ENCODE measurements at regions of chr17 and their contacts with region 1.

Region 1: DNA sequence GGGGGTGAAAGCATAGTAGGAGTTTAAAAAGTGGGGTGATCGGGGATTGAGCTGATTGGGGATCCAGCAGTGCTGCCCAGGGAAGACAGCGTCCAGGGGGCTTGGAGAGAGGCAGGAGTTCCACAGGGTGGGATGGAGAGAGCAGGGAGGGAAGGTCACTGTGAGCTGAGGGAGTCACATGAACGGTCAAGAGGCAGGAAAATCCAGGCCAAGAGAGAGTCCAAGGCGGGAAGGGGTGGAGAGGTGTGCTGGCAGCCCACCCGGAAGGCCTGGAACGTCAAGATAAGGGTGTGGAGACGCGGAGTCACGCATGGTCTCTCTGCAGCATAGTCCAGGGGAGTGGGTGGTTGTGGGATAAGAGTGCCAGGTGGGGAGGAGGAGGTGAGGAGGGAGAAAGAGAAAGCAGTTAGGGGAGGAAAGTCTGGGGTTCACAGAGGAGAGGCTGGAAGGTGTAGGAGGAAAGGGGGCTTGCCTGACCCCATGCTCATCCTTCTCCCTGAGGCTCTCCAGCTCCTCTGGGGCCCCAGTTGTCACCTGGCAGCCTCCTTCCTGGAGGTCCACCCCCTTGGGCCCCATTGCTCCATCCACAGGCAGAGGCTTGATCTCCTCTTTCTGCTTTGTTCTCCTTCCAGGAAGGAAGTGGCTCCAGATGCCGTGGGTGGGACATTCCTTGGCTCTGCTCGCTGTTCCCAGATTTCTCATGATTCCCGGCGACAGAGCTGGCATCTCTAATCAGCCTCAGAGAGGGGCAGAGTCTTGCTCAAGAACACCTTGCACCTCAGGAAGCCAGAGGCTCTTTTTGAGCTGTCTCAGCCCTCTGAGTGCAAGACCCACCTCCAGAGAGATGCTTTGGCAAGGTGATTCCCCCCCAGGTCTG is 28.7 kb downstream of the CCR7 start:
- DNase-seq: no peak
- H3K4me3 ChIP-seq: no peak overlapping the region
- H3K4me3 Mint-ChIP-seq: no peak overlapping the region
- H3K27ac Mint-ChIP-seq: no peak overlapping the region
- H3K4me1 ChIP-seq: 0 out of 2 replicates have a peak, but pooled peaks cover 9% of the 10 kb centered on the region
- H3K4me1 Mint-ChIP-seq: no peaks in the 10 kb centered on the region
- H3K27me3 ChIP-seq: no peaks in the 10 kb centered on the region
- H3K27me3 Mint-ChIP-seq: no peaks in the 10 kb centered on the region
- CTCF ChIP-seq: no peak

Region 2: GRCh38 chr17:40551879-40552768 is 15.6 kb after region 1 on chr17:
- CTCF ChIA-PET with region 1: interaction called, 15 read pairs
- POLR2A ChIA-PET with region 1: no interaction called
- intact Hi-C with region 1: no loop called
- DNase-seq: peak; percentile 55 to 56
- H3K4me3 ChIP-seq: no peak overlapping the region
- H3K4me3 Mint-ChIP-seq: peak overlapping the region; percentile 32
- H3K27ac Mint-ChIP-seq: peak overlapping the region; percentile 65
- H3K4me1 ChIP-seq: peaks cover 53% of the 10 kb centered on the region
- H3K4me1 Mint-ChIP-seq: peaks cover 36% of the 10 kb centered on the region
- H3K27me3 ChIP-seq: no peaks in the 10 kb centered on the region
- H3K27me3 Mint-ChIP-seq: no peaks in the 10 kb centered on the region
- CTCF ChIP-seq: no peak

Region 3: GRCh38 chr17:40582328-40582901 is 45.9 kb after region 1 on chr17:
- CTCF ChIA-PET with region 1: no interaction called
- POLR2A ChIA-PET with region 1: no interaction called
- intact Hi-C with region 1: no loop called
- DNase-seq: no peak
- H3K4me3 ChIP-seq: no peak overlapping the region
- H3K4me3 Mint-ChIP-seq: no peak overlapping the region
- H3K27ac Mint-ChIP-seq: no peak overlapping the region
- H3K4me1 ChIP-seq: no peaks in the 10 kb centered on the region
- H3K4me1 Mint-ChIP-seq: no peaks in the 10 kb centered on the region
- H3K27me3 ChIP-seq: no peaks in the 10 kb centered on the region
- H3K27me3 Mint-ChIP-seq: peaks cover 5% of the 10 kb centered on the region
- CTCF ChIP-seq: no peak